ENCODE measurements at regions of chr10 and their contacts with region 1.

Region 1: GRCh38 chr10:35005868-35006267 is 84.3 kb downstream of the CUL2 start:
- ATAC-seq: peak in 3 of 8 experiments; percentile 93 to 97 (median 96)
- H3K4me3 ChIP-seq: no peak overlapping the region
- H3K27ac ChIP-seq: no peak overlapping the region
- H3K4me1 ChIP-seq: no peaks in the 10 kb centered on the region

Region 2: GRCh38 chr10:34696423-34696822 is 309.4 kb before region 1 on chr10:
- in situ Hi-C with region 1: loop called in 1 of 9 experiments (anchors 25 kb)
- ATAC-seq: peak; percentile 47 to 95 (median 82)
- H3K4me3 ChIP-seq: no peak overlapping the region
- H3K27ac ChIP-seq: no peak overlapping the region
- H3K4me1 ChIP-seq: no peaks in the 10 kb centered on the region